ENCODE measurements at regions of chr18 and their contacts with region 1.

Region 1: DNA sequence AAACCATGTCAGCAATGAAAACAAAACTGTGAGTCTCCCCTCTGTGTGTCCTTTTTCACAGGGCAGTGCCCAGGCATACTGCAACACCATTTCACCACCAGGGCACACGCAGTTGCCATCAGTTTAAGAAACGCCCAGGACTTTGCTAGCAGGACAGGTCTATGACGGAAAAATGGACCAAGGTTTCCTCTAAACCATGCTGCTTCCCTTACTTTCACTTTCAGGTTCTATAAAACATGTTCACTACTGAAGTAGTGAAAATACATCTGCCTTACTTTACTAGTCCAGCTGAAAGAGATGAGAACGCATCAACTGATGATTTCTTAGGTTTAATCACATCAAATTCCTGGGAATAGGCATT is 110.5 kb downstream of the TCF4 start:
- DNase-seq: peak; percentile 23
- ATAC-seq: peak; percentile 94
- H3K4me3 Mint-ChIP-seq: peak overlapping the region; percentile 97
- H3K27ac Mint-ChIP-seq: peak overlapping the region; percentile 93
- H3K4me1 Mint-ChIP-seq: peaks cover 21% of the 10 kb centered on the region
- H3K27me3 Mint-ChIP-seq: no peaks in the 10 kb centered on the region
- CTCF ChIP-seq: no peak

Region 2: GRCh38 chr18:55465313-55465712 is 12.2 kb before region 1 on chr18:
- CTCF ChIA-PET with region 1: no interaction called
- POLR2A ChIA-PET with region 1: no interaction called
- intact Hi-C with region 1: loop called (anchors 1 kb)
- DNase-seq: no peak
- ATAC-seq: peak; percentile 92
- H3K4me3 Mint-ChIP-seq: no peak overlapping the region
- H3K27ac Mint-ChIP-seq: peak overlapping the region; percentile 66
- H3K4me1 Mint-ChIP-seq: peaks cover 40% of the 10 kb centered on the region
- H3K27me3 Mint-ChIP-seq: no peaks in the 10 kb centered on the region
- CTCF ChIP-seq: no peak

Region 3: GRCh38 chr18:55509631-55510324 is 32.3 kb after region 1 on chr18:
- CTCF ChIA-PET with region 1: no interaction called
- POLR2A ChIA-PET with region 1: interaction called, 4 read pairs
- intact Hi-C with region 1: loop called (anchors 5 kb)
- DNase-seq: no peak
- ATAC-seq: peak; percentile 82
- H3K4me3 Mint-ChIP-seq: peak overlapping the region; percentile 61
- H3K27ac Mint-ChIP-seq: peak overlapping the region; percentile 68
- H3K4me1 Mint-ChIP-seq: peaks cover 56% of the 10 kb centered on the region
- H3K27me3 Mint-ChIP-seq: no peaks in the 10 kb centered on the region
- CTCF ChIP-seq: no peak

Region 4: GRCh38 chr18:55633032-55633431 is 155.6 kb after region 1 on chr18:
- CTCF ChIA-PET with region 1: no interaction called
- POLR2A ChIA-PET with region 1: interaction called, 10 read pairs
- intact Hi-C with region 1: no loop called
- DNase-seq: no peak
- ATAC-seq: no peak
- H3K4me3 Mint-ChIP-seq: no peak overlapping the region
- H3K27ac Mint-ChIP-seq: no peak overlapping the region
- H3K4me1 Mint-ChIP-seq: no peaks in the 10 kb centered on the region
- H3K27me3 Mint-ChIP-seq: no peaks in the 10 kb centered on the region
- CTCF ChIP-seq: no peak